ENCODE measurements at regions of chr11 and their contacts with region 1.

Region 1: GRCh38 chr11:355581-356458 is 13.5 kb upstream of the B4GALNT4 start:
- DNase-seq: peak; percentile 94 to 96
- ATAC-seq: peak; percentile 96

Region 2: DNA sequence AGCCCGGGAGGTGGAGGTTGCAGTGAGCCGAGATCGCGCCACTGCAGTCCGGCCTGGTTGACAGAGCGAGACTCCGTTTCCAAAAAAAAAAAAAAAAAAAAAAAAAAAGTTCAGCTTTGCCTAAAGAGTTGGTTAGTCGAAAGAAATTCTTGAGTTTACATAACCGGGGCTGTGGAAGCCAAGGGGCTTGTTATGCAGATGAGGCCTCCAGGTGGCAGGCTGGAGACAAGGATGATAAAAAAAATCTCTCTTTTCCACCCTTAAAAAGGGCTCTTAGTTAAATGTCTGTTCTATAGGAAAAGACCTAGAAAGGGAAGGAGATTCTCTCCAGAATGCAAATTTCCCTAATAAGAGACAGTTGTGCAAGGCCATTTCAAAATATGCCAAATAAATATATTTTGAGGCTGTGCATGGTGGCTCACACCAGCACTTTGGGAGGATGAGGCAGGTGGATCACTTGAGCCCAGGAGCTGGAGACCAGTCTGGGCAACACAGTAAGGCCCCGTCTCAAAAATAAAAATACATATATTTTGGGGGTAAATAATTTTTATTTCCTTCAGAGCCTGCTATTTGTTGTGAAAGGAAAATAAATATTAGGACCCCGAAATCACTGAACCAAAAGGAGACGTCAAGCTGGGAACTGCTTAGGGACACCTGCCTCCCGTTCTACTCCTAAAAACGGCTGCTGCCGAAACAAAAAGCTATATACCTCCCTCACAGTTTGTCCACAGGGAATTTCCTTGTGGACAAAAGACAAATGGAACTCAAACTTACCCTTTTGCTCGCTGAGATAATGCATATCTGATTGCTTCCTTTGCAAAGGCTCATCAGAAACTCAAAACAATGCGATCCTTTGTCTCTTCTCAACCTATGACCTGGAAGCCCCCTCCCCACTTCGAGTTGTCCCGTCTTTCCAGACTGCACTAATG is 50.6 kb before region 1 on chr11:
- intact Hi-C with region 1: loop called in 1 of 2 experiments (anchors 10 kb)
- DNase-seq: peak in 1 of 2 donors; percentile 78
- ATAC-seq: peak; percentile 58